PC-9 (cell line): ENCODE measurements at regions of chr20 and their contacts with region 1.

Region 1: GRCh38 chr20:4135385-4136077 is 120.2 kb upstream of the RNF24 start:
- DNase-seq: peak; percentile 84 to 97
- H3K4me3 ChIP-seq: no peak overlapping the region
- H3K27ac ChIP-seq: peak overlapping the region; percentile 75
- H3K4me1 ChIP-seq: peaks cover 60% of the 10 kb centered on the region
- H3K27me3 ChIP-seq: no peaks in the 10 kb centered on the region
- CTCF ChIP-seq: no peak

Region 2: GRCh38 chr20:4119854-4120209 is 15.7 kb before region 1 on chr20:
- CTCF ChIA-PET with region 1: no interaction called
- POLR2A ChIA-PET with region 1: interaction called, 5 read pairs
- intact Hi-C with region 1: loop called (anchors 1 kb)
- DNase-seq: peak in 1 of 2 experiments; percentile 81
- H3K4me3 ChIP-seq: peak overlapping the region; percentile 36; the same call in 1 of the 2 replicates
- H3K27ac ChIP-seq: peak overlapping the region; percentile 94
- H3K4me1 ChIP-seq: peaks cover 39% of the 10 kb centered on the region
- H3K27me3 ChIP-seq: no peaks in the 10 kb centered on the region
- CTCF ChIP-seq: no peak